Activated CD8-positive, alpha-beta T cell treated with anti-CD3 and anti-CD28 coated beads for 36 hours (primary cell): ENCODE measurements at regions of chr15 and their contacts with region 1.

Region 1: DNA sequence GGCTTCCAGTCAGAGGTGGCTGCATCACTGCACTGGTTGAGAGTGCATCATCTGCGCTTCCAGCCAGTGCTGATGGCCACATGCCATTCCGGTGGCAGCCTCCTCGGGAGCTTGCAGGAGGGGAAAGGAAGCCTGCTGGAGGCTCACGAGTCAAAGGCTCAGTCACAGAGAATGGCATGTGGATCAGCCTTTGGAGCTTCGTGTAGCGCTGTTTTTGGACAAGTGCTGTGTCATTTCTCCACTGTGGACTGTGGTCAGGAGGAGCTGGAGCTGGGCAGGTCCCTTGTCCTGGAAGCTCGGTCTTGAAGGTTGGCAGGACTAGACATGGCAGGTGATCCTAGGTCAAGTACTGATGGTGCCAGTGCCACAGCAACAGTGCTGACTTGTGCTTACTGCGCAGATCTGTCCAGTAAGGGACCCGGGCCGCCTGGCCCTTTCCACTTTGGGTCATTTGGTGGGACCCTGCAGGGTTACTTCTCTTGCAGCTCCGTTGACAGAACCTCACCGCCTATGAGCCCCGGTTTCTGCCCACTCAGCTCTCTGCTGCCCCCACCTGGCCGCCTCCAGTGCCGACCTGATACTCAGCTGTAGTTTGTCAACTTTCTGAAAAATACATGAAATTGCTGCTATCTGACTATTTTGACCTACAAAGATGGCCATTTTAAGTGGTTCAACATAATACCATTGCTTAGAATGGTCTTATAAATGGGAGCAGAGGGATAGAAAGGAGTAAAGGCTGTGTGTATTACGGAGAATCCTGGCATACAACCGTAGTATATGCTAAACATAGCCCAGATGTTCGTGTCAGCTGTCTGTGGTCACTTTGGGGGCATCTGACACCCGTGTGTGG is 27.6 kb upstream of the TRPM1 start:
- DNase-seq: peak; percentile 86
- ATAC-seq: peak; percentile 86
- H3K4me3 Mint-ChIP-seq: no peak overlapping the region
- H3K27ac Mint-ChIP-seq: no peak overlapping the region
- H3K4me1 Mint-ChIP-seq: no peaks in the 10 kb centered on the region
- H3K27me3 Mint-ChIP-seq: no peaks in the 10 kb centered on the region
- CTCF ChIP-seq: peak; percentile 97

Region 2: DNA sequence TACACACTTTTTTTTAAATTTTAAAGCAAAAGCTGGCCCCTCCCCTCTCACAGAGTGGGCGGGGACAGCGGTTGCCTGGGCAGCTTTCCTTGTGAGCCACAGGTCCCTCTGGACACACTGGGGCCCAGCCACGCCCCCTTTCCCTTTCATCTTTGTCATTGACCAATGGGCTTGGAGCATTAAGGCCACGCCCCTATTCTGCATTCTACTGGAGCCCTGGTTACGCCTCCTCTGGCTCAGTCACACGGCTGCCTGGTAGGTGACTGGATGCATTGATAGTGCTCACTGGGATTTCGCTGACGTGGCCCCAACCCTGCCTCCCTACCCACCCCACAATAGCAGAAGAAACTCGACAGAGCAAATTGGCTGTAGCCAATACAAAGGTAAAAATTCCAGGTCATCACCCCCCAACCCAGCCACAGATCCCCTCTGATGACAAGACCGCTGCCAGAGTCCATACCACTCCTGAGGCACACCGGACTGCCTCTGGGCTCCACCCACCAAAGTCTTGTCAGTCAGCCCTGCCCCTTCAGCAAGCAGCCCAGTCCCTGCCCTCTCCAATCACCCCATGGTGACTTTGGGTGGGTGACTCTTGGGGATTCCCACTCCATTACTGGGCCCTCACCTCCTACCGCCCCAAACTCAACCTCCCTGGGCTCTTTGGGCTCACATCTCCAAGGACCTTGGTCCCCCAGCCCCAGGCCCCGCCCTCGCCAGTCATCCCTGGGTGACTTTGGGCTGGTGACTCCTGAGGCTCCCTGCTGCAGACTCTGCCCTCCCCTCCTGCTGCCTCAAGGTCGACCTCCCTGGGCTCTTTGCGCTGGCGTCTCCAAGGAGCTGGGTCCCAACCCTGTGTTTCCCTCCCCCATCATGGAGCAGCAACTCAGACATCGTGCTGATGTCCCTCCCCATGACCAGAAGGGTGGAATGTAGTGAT is 337.6 kb before region 1 on chr15:
- CTCF ChIA-PET with region 1: interaction called, 3 read pairs
- POLR2A ChIA-PET with region 1: no interaction called
- intact Hi-C with region 1: loop called (anchors 10 kb)
- DNase-seq: peak; percentile 28
- ATAC-seq: no peak
- H3K4me3 Mint-ChIP-seq: no peak overlapping the region
- H3K27ac Mint-ChIP-seq: no peak overlapping the region
- H3K4me1 Mint-ChIP-seq: no peaks in the 10 kb centered on the region
- H3K27me3 Mint-ChIP-seq: peaks cover 6% of the 10 kb centered on the region
- CTCF ChIP-seq: no peak

Region 3: GRCh38 chr15:30896211-30896606 is 232.9 kb before region 1 on chr15:
- CTCF ChIA-PET with region 1: interaction called, 23 read pairs
- POLR2A ChIA-PET with region 1: no interaction called
- intact Hi-C with region 1: no loop called
- DNase-seq: no peak
- ATAC-seq: no peak
- H3K4me3 Mint-ChIP-seq: no peak overlapping the region
- H3K27ac Mint-ChIP-seq: no peak overlapping the region
- H3K4me1 Mint-ChIP-seq: peaks cover 4% of the 10 kb centered on the region
- H3K27me3 Mint-ChIP-seq: peaks cover 2% of the 10 kb centered on the region
- CTCF ChIP-seq: no peak

Region 4: GRCh38 chr15:31013538-31014228 is 115.5 kb before region 1 on chr15:
- CTCF ChIA-PET with region 1: interaction called, 17 read pairs
- POLR2A ChIA-PET with region 1: no interaction called
- intact Hi-C with region 1: no loop called
- DNase-seq: no peak
- ATAC-seq: peak; percentile 68
- H3K4me3 Mint-ChIP-seq: no peak overlapping the region
- H3K27ac Mint-ChIP-seq: peak overlapping the region; percentile 57
- H3K4me1 Mint-ChIP-seq: peaks cover 17% of the 10 kb centered on the region
- H3K27me3 Mint-ChIP-seq: no peaks in the 10 kb centered on the region
- CTCF ChIP-seq: no peak

Region 5: DNA sequence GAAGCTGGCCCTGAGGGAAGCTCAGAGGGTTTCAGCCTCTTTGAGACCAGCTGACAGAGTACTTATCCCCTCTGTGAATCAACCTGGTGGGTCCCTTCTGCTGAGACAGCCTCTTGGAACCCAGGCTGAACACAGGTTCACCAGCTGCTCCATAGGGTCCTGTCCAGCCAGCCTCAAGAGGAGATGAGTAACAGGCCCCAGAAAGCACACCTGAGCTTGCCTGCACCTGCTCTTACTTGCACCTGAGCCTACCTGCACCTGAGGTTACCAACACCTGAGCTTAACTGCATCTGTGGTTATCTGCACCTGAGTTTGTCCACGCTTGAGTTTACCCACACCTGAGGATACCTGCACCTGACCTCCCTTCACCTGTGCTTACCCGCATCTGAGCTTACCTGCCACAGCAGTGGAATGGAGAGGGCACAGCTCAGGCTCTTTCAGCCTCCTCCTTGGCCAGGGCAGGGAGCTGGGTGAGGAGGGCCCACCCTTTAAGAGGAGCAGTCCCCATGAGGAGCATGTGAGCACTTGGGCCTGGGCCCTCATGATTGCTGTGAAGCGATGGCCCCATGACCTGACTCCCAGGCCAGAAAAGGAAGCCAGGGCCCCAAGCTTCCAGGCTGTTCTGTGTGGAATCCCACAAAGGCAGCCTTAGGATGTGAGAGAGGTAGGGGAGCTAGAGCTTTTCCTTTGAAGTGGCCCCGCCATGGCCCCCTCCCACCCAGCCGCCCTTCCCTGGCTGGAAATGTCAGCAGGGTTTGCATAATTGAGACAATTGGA is 27.7 kb before region 1 on chr15 and contains the start of gene TRPM1:
- CTCF ChIA-PET with region 1: interaction called, 14 read pairs
- POLR2A ChIA-PET with region 1: no interaction called
- intact Hi-C with region 1: no loop called
- DNase-seq: no peak
- ATAC-seq: no peak
- H3K4me3 Mint-ChIP-seq: no peak within 1 kb of the TSS
- H3K27ac Mint-ChIP-seq: no peak within 1 kb of the TSS
- H3K4me1 Mint-ChIP-seq: no peaks in the 10 kb centered on the region
- H3K27me3 Mint-ChIP-seq: peaks cover 2% of the 10 kb centered on the region
- CTCF ChIP-seq: no peak
- total RNA-seq, gene TRPM1: not detected

Region 6: DNA sequence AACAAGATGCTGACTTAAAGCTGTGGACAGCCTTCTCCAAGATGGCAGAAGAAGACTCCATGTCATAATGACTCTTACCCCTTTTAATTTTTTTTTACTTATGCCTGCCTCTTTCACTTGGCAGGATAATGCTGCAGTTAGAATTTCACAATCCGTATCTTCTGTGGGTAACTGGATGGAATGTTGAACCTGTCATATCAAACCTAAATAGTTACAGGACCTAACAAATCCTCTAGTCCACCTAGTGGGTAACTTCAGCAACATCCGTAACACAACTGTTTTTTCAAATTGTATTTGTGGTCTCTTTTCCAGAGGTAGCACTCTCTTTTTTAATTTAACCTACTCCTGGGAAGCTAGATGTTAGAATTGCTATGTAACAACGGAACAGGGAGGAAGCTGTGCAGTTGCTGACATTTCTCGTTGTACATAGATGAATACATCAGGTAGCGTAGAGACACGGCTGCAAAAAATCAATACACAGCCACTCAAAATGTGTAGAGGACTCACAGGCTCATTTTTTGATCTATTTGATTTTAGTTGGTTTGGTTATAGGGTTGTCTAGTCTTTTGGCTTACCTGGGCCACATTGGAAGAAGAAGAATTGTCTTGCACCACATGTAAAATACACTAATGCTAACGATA is 16.2 kb after region 1 on chr15:
- CTCF ChIA-PET with region 1: interaction called, 16 read pairs
- POLR2A ChIA-PET with region 1: interaction called, 4 read pairs
- intact Hi-C with region 1: no loop called
- DNase-seq: no peak
- ATAC-seq: no peak
- H3K4me3 Mint-ChIP-seq: no peak overlapping the region
- H3K27ac Mint-ChIP-seq: no peak overlapping the region
- H3K4me1 Mint-ChIP-seq: no peaks in the 10 kb centered on the region
- H3K27me3 Mint-ChIP-seq: no peaks in the 10 kb centered on the region
- CTCF ChIP-seq: no peak

Region 7: GRCh38 chr15:31280046-31280830 is 151.1 kb after region 1 on chr15:
- CTCF ChIA-PET with region 1: no interaction called
- POLR2A ChIA-PET with region 1: no interaction called
- intact Hi-C with region 1: no loop called
- DNase-seq: no peak
- ATAC-seq: no peak
- H3K4me3 Mint-ChIP-seq: no peak overlapping the region
- H3K27ac Mint-ChIP-seq: no peak overlapping the region
- H3K4me1 Mint-ChIP-seq: peaks cover 5% of the 10 kb centered on the region
- H3K27me3 Mint-ChIP-seq: no peaks in the 10 kb centered on the region
- CTCF ChIP-seq: no peak